ENCODE measurements at regions of chr1 and their contacts with region 1.

Region 1: DNA sequence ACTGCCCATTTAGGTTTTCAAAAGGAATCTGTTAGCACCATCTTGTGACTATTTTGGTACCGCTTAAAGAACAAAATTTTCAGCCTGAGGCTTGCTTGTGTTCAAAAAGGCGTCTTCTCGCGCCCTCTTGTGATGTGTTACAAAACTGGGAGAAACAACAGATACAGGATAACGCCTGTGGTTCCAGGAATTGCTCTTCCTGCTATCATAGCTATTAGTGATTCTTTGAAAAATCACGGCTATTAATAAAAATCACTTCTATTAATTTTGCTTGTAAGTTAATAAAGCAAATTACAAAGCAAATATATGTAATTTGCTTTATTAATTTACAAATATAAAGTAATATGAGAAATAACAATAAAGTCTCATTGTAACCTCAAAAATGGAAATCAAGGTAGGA is 82.2 kb upstream of the ABCD3 start:
- DNase-seq: peak; percentile 51
- H3K4me3 ChIP-seq: peak overlapping the region in 1 of 2 experiments; percentile 46; a peak in 1 of 4 replicates
- H3K27ac ChIP-seq: no peak overlapping the region
- H3K4me1 ChIP-seq: peaks cover 6 to 11% of the 10 kb centered on the region in 2 experiments; a peak in 3 of 4 replicates
- H3K27me3 ChIP-seq: 0 out of 2 replicates have a peak, but pooled peaks cover 4% of the 10 kb centered on the region
- CTCF ChIP-seq: peak; percentile 99
- EP300 ChIP-seq: no peak
- RAD21 ChIP-seq: peak; percentile 100

Region 2: DNA sequence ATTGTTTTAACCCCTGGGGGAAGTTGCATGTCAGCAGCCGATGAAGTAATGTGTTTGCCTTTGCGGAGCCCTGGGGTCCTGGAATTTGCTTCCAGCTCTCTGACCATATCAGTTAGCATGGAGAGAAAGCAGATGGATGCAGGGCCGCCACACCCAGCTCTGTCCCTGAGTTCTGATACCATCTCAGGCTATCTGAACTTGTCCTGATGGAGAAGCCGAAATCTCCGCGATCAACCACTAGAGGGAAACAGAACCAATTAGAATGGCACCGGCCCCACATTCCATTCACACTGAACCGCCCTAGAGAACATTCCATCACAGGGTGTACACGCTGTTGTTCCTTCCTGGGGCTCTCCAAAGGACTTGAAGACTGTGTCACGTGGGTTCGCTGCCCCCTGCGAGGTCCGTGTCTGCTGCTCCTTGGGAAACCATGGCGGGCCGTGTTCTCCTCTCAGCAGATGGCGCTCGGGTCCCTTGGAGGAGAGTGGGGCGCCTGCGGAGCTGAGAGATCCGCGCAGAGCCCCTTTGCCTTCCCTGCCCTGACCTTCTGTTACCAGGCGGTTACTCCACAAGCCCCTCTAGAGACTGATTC is 290.4 kb before region 1 on chr1:
- CTCF ChIA-PET with region 1: interaction called, 889 read pairs
- POLR2A ChIA-PET with region 1: no interaction called
- DNase-seq: peak; percentile 72
- H3K4me3 ChIP-seq: no peak overlapping the region; a peak in 1 of 4 replicates
- H3K27ac ChIP-seq: peak overlapping the region in 1 of 2 experiments; percentile 58; a peak in 3 of 4 replicates
- H3K4me1 ChIP-seq: peaks cover 16 to 21% of the 10 kb centered on the region in 2 experiments; a peak in 3 of 4 replicates
- H3K27me3 ChIP-seq: no peaks in the 10 kb centered on the region
- CTCF ChIP-seq: peak; percentile 81
- EP300 ChIP-seq: peak; percentile 54 to 58; a peak in 3 of 4 replicates
- RAD21 ChIP-seq: peak; percentile 51

Region 3: GRCh38 chr1:94180650-94181049 is 155.3 kb before region 1 on chr1:
- CTCF ChIA-PET with region 1: interaction called, 11 read pairs
- POLR2A ChIA-PET with region 1: no interaction called
- DNase-seq: no peak
- H3K4me3 ChIP-seq: no peak overlapping the region
- H3K27ac ChIP-seq: peak overlapping the region in 1 of 2 experiments; percentile 20; a peak in 1 of 4 replicates
- H3K4me1 ChIP-seq: no peaks in the 10 kb centered on the region
- H3K27me3 ChIP-seq: no peaks in the 10 kb centered on the region
- CTCF ChIP-seq: no peak
- EP300 ChIP-seq: no peak
- RAD21 ChIP-seq: no peak

Region 4: DNA sequence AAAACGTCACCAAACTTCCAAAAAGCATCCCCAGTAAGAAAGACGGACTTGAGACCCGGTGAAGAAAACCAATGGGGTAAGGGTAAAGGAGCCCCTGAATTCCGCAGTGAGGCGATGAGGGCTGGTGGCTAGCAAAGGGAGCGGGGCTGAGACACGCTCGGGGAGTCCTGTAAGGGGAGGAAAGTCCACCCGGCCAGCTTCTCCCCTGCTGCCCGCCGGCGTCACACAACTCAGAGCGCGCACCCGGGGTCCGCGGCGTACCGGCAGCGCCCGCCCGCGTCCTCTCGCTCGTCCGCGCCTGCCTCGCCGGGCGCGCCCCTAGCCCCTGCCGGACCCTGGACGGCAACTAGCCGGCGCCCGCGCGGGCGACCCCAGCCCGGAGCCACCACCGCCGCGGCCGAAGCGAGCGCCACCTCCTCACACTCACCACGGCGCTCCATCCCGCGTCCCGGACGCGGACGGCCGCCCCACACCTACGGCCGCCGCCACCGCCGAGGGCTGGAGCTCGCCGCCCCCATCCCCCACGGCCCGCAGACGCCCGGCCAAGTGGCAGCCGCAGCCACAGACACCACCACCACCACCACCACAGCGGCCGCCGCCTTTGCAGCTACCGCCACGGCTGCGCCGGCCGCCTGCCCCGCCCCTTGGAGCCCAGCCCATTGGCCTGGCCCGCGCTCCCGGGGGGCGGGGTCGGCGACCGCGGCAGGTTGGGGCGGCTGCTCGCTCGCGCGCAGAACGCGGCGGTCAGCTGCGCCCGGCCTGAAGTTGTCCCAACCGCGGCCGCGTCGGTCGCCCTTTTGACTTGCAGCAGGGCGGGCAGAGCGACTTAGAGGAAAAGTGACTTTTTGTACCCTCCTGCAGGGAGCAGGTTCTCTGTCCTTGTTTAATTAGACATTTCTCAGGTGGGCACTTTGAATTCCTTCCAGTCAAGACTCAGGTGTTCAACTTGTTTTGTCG is 88.5 kb before region 1 on chr1:
- CTCF ChIA-PET with region 1: interaction called, 186 read pairs
- POLR2A ChIA-PET with region 1: no interaction called
- DNase-seq: peak; percentile 96
- H3K4me3 ChIP-seq: peak overlapping the region; percentile 59 to 80
- H3K27ac ChIP-seq: no peak overlapping the region; a peak in 1 of 4 replicates
- H3K4me1 ChIP-seq: peaks cover 0 to 9% of the 10 kb centered on the region in 2 experiments; a peak in 2 of 4 replicates
- H3K27me3 ChIP-seq: no peaks in the 10 kb centered on the region
- CTCF ChIP-seq: no peak
- EP300 ChIP-seq: no peak
- RAD21 ChIP-seq: no peak; the same call in 1 of the 2 replicates

Region 5: DNA sequence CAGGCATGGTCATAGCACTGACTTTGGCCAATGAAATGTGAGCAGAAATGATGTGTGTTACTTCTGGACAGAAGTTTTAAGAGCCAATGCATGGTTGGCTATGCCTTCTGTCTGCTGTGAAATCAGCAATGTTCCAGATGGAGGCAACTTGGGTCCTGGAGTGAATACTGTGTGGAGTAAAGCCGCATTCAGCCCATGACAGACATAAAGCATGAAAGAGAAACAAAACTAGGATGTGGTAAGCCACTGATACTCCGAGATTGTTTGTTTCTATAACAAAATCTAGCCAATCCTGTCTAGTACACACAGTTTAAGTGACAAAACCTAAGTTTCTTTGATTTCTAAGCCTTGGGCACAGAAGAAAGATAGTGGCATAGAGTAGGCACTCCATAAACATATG is 51.5 kb before region 1 on chr1:
- CTCF ChIA-PET with region 1: interaction called, 23 read pairs
- POLR2A ChIA-PET with region 1: no interaction called
- DNase-seq: no peak
- H3K4me3 ChIP-seq: no peak overlapping the region
- H3K27ac ChIP-seq: no peak overlapping the region
- H3K4me1 ChIP-seq: peaks cover 12 to 18% of the 10 kb centered on the region in 2 experiments; a peak in 2 of 4 replicates
- H3K27me3 ChIP-seq: no peaks in the 10 kb centered on the region
- CTCF ChIP-seq: no peak
- EP300 ChIP-seq: no peak
- RAD21 ChIP-seq: no peak

Region 6: GRCh38 chr1:94417978-94418663 is 82.2 kb after region 1 on chr1 and contains the start of gene ABCD3:
- CTCF ChIA-PET with region 1: interaction called, 11 read pairs
- POLR2A ChIA-PET with region 1: no interaction called
- DNase-seq: peak; percentile 96
- H3K4me3 ChIP-seq: peak within 1 kb of the TSS; percentile 78 to 96
- H3K27ac ChIP-seq: peak within 1 kb of the TSS; percentile 85 to 98
- H3K4me1 ChIP-seq: peaks cover 22 to 24% of the 10 kb centered on the region in 2 experiments
- H3K27me3 ChIP-seq: no peaks in the 10 kb centered on the region
- CTCF ChIP-seq: no peak
- EP300 ChIP-seq: no peak
- RAD21 ChIP-seq: no peak
- polyA plus RNA-seq, gene ABCD3: 6.5 and 8.7 TPM in 2 replicates